Ascending aorta (tissue), 2 donors: ENCODE measurements at regions of chr17 and their contacts with region 1.

Region 1: GRCh38 chr17:7851438-7852256 is 3.2 kb upstream of the TMEM88 start:
- DNase-seq: peak in 1 of 2 donors; percentile 91
- H3K4me3 ChIP-seq: peak overlapping the region in 1 of 2 donors; percentile 41
- H3K27ac ChIP-seq: no peak overlapping the region
- H3K4me1 ChIP-seq: peaks cover 12 to 18% of the 10 kb centered on the region in 2 donors
- H3K27me3 ChIP-seq: no peaks in the 10 kb centered on the region
- CTCF ChIP-seq: peak; percentile 98 to 99 (median 99)

Region 2: DNA sequence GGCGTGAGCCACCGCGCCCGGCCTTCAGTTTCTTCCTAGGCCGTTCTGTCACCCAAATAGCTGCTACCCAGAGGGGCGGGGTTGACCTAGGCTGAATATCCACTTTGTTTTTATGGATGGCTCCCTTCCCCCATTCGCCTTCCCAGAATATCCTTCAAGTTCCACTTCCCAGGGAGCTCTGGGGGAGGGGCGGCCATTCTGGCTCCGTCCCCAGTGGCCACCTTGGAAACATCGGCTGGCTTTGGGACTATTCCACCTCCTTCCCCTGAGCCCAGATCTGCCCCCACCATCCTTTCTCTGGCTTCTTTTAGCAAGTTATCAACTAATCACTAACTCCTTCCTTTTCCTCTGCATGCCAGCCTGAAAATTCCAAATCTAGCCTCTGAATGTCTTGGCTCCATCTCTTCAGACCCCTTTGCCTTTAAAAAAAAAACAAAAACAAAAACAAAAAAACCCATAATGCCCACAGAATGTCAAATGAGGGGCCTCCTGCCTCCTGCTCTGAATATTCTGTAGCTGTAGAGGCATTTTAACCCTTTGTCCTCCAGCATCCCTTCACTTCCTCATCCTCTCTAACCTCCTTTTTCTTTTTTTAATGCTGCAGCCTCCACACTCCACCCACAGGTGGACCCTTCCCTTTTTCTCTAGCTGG is 194.6 kb before region 1 on chr17:
- intact Hi-C with region 1: no loop called
- DNase-seq: no peak
- H3K4me3 ChIP-seq: no peak overlapping the region
- H3K27ac ChIP-seq: no peak overlapping the region
- H3K4me1 ChIP-seq: peaks cover 0 to 6% of the 10 kb centered on the region in 2 donors
- H3K27me3 ChIP-seq: no peaks in the 10 kb centered on the region
- CTCF ChIP-seq: no peak

Region 3: GRCh38 chr17:7740481-7741001 is 111.1 kb before region 1 on chr17:
- intact Hi-C with region 1: loop called (anchors 1 kb)
- DNase-seq: no peak
- H3K4me3 ChIP-seq: no peak overlapping the region
- H3K27ac ChIP-seq: no peak overlapping the region
- H3K4me1 ChIP-seq: no peaks in the 10 kb centered on the region
- H3K27me3 ChIP-seq: no peaks in the 10 kb centered on the region
- CTCF ChIP-seq: no peak

Region 4: DNA sequence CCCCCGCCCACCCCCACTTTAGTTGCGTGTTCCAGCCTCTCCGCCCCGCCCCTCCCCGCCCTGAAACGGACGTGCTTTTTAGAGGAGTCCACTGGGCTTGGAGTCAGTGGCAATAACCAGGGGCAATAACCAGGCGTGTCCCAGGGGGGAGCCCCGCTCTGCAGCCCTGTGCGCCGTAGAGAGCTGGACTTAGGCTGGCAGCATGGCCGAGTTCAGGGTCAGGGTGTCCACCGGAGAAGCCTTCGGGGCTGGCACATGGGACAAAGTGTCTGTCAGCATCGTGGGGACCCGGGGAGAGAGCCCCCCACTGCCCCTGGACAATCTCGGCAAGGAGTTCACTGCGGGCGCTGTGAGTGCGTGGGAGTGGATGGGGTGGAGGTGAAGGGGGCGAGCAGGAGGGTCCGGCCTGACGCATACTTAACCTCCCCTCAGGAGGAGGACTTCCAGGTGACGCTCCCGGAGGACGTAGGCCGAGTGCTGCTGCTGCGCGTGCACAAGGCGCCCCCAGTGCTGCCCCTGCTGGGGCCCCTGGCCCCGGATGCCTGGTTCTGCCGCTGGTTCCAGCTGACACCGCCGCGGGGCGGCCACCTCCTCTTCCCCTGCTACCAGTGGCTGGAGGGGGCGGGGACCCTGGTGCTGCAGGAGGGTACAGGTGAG is 187.4 kb after region 1 on chr17 and contains the start of gene ALOX15B:
- intact Hi-C with region 1: no loop called
- DNase-seq: peak in 1 of 2 donors; percentile 56
- H3K4me3 ChIP-seq: peak within 1 kb of the TSS; percentile 5 to 48
- H3K27ac ChIP-seq: no peak within 1 kb of the TSS
- H3K4me1 ChIP-seq: no peaks in the 10 kb centered on the region
- H3K27me3 ChIP-seq: peaks cover 10% of the 10 kb centered on the region
- CTCF ChIP-seq: no peak
- total RNA-seq, gene ALOX15B: 2.3 TPM